Uterus (tissue), 4 donors: ENCODE measurements at regions of chr5 and their contacts with region 1.

Region 1: DNA sequence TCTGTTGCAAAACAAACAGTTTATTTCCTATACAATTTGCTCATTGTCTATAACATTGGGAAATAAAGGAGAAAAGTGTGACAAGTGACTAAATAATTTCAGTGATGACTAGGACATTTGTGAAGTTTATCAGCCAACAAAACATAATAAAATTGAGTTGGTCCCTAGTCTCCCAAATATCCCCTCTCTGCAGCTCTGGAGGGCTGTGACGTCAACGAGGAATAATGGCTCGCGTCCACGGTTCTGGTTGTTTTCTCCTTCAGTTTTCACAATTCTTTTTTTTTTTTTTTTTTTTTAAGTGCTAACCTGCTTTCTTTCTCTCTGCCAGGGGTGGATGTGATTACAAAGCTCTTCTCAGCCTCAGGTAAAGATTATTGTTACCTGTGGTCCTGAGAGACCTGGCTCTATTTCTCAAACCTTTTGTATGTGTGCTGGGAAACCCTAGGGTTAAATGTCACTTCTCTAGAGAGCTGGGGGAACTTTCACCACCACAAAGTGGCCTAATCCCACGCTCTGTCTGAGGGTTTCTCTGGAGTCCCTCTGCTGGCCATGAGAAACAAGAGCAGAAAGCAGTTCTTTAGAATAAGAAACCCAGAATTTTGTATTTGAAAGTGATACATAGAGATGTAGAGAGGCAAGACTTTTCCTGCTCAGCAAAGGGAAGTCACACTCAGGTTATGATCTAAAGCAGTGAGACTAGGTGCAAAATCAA is 36.2 kb upstream of the ANKRD55 start:
- DNase-seq: peak in 1 of 2 donors; percentile 43
- H3K4me3 ChIP-seq: no peak overlapping the region
- H3K27ac ChIP-seq: no peak overlapping the region
- H3K4me1 ChIP-seq: no peaks in the 10 kb centered on the region
- H3K27me3 ChIP-seq: no peaks in the 10 kb centered on the region
- CTCF ChIP-seq: peak in 3 of 4 experiments; percentile 33 to 57 (median 51)
- POLR2A ChIP-seq: no peak

Region 2: DNA sequence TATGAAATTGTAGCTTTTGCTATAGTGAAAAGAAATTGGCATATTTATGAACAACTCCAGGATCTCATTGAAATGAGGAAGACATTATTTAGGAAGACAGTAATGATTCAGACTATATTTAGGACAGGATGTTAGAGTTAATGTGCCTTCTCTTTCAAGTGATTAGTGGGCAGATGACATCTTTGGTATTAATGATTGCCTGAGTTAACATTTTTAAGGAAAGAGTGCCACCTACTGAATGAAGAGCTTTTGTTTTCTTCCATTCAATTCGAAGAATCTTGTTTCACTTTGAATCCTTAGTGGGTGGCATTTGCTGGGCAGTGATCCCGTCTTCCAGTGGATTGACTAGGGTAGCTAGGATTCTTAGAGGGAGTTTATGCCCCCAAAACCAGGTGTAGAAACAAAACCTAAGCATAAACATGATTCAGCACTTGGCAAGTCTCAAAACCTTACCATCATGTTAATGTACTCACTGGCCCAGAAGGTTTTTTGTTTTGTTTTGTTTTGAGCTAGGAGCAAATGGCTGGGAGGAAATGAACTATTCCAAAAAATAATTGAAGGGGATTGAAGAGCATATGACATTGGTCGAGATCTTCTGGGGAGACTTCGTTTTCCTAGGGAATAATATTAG is 569.2 kb after region 1 on chr5:
- intact Hi-C with region 1: loop called (anchors 5 kb)
- DNase-seq: no peak
- H3K4me3 ChIP-seq: no peak overlapping the region
- H3K27ac ChIP-seq: peak overlapping the region; percentile 18 to 51
- H3K4me1 ChIP-seq: no peaks in the 10 kb centered on the region
- H3K27me3 ChIP-seq: no peaks in the 10 kb centered on the region
- CTCF ChIP-seq: peak; percentile 57 to 77 (median 67)
- POLR2A ChIP-seq: no peak